Uterus (tissue), 4 donors: ENCODE measurements at regions of chr1 and their contacts with region 1.

Region 1: GRCh38 chr1:24830680-24831272 is 85.5 kb downstream of the CLIC4 start:
- DNase-seq: no peak
- H3K4me3 ChIP-seq: no peak overlapping the region
- H3K27ac ChIP-seq: peak overlapping the region; percentile 57 to 63
- H3K4me1 ChIP-seq: peaks cover 0 to 18% of the 10 kb centered on the region in 2 donors
- H3K27me3 ChIP-seq: no peaks in the 10 kb centered on the region
- CTCF ChIP-seq: peak; percentile 79 to 89 (median 86)
- POLR2A ChIP-seq: no peak

Region 2: GRCh38 chr1:24688621-24689195 is 142.1 kb before region 1 on chr1:
- intact Hi-C with region 1: loop called (anchors 5 kb)
- DNase-seq: peak; percentile 73 to 76
- H3K4me3 ChIP-seq: no peak overlapping the region
- H3K27ac ChIP-seq: no peak overlapping the region
- H3K4me1 ChIP-seq: peaks cover 0 to 4% of the 10 kb centered on the region in 2 donors
- H3K27me3 ChIP-seq: no peaks in the 10 kb centered on the region
- CTCF ChIP-seq: peak; percentile 88 to 94 (median 92)
- POLR2A ChIP-seq: no peak